Activated B cell treated with CpG ODN at 0.5 μM for 24 hours (primary cell): ENCODE measurements at regions of chr2 and their contacts with region 1.

Region 1: DNA sequence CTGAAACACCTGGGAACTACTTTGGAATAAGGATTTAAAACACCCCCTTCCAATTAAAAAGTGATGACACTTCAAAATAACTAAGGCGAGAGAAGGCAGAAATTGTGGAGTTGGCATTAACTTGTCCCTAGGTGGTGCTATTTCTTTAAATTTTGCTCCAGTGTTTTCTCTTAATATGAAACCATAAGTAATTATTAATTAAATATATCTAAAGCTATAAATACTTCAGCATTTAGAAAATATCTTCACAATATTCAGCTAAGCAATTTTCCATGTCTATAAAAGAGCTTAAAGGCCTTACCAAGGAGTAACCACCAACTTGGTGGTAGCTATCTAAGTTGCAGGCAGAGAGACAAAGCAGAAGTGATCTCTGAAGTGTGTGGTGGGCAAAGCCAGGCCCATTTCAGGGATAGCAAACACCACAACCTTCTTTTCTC is 186.8 kb upstream of the PGAP1 start:
- DNase-seq: no peak
- ATAC-seq: peak; percentile 68
- H3K4me3 Mint-ChIP-seq: no peak overlapping the region
- H3K27ac Mint-ChIP-seq: peak overlapping the region; percentile 77
- H3K4me1 Mint-ChIP-seq: peaks cover 34% of the 10 kb centered on the region
- H3K27me3 Mint-ChIP-seq: no peaks in the 10 kb centered on the region
- CTCF ChIP-seq: no peak

Region 2: DNA sequence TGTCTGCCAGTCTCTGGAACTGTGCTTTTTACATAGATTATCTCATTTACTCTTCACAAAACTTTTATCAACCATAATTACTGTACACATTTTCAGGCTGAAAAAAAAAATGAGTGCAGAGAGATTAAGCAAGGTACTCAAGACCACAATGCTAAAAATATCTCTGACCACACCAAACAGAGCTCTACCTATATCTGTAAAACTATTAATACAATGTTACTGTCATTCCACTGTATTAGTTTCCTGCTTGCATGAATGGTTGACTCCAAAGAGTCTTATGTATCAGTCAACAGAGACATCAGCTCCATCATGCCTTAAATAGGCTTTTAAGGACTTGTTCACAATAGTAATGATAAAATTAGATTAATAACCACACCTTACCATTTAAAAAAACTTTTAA is 608.5 kb before region 1 on chr2:
- CTCF ChIA-PET with region 1: no interaction called
- POLR2A ChIA-PET with region 1: no interaction called
- intact Hi-C with region 1: no loop called
- DNase-seq: no peak
- ATAC-seq: no peak
- H3K4me3 Mint-ChIP-seq: no peak overlapping the region
- H3K27ac Mint-ChIP-seq: no peak overlapping the region
- H3K4me1 Mint-ChIP-seq: no peaks in the 10 kb centered on the region
- H3K27me3 Mint-ChIP-seq: peaks cover 10% of the 10 kb centered on the region
- CTCF ChIP-seq: no peak

Region 3: GRCh38 chr2:196535742-196536141 is 577.6 kb before region 1 on chr2:
- CTCF ChIA-PET with region 1: no interaction called
- POLR2A ChIA-PET with region 1: no interaction called
- intact Hi-C with region 1: no loop called
- DNase-seq: no peak
- ATAC-seq: no peak
- H3K4me3 Mint-ChIP-seq: no peak overlapping the region
- H3K27ac Mint-ChIP-seq: no peak overlapping the region
- H3K4me1 Mint-ChIP-seq: no peaks in the 10 kb centered on the region
- H3K27me3 Mint-ChIP-seq: peaks cover 5% of the 10 kb centered on the region
- CTCF ChIP-seq: no peak

Region 4: DNA sequence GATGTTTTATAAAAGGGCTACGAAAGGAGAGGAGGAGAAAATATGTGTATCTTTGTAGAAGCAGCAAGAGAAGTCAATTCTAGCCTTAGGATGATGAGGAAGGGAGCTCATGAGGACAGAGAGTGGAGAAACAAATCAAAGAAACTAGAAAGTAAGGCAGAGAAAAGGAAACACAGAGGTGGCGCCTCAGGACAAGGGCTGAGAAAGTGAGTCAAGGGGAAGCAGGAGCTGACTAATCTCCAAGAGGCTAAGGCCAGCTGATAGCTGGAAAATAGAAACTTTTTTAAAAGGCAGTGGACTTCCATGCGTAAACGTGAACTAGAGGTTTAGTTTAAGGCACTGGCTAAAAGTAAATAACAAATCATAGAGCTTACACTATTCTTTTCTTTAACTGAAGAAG is 23.9 kb after region 1 on chr2:
- CTCF ChIA-PET with region 1: interaction called, 20 read pairs
- POLR2A ChIA-PET with region 1: no interaction called
- intact Hi-C with region 1: no loop called
- DNase-seq: no peak
- ATAC-seq: no peak
- H3K4me3 Mint-ChIP-seq: peak overlapping the region; percentile 17
- H3K27ac Mint-ChIP-seq: peak overlapping the region; percentile 79
- H3K4me1 Mint-ChIP-seq: peaks cover 94% of the 10 kb centered on the region
- H3K27me3 Mint-ChIP-seq: no peaks in the 10 kb centered on the region
- CTCF ChIP-seq: no peak

Region 5: DNA sequence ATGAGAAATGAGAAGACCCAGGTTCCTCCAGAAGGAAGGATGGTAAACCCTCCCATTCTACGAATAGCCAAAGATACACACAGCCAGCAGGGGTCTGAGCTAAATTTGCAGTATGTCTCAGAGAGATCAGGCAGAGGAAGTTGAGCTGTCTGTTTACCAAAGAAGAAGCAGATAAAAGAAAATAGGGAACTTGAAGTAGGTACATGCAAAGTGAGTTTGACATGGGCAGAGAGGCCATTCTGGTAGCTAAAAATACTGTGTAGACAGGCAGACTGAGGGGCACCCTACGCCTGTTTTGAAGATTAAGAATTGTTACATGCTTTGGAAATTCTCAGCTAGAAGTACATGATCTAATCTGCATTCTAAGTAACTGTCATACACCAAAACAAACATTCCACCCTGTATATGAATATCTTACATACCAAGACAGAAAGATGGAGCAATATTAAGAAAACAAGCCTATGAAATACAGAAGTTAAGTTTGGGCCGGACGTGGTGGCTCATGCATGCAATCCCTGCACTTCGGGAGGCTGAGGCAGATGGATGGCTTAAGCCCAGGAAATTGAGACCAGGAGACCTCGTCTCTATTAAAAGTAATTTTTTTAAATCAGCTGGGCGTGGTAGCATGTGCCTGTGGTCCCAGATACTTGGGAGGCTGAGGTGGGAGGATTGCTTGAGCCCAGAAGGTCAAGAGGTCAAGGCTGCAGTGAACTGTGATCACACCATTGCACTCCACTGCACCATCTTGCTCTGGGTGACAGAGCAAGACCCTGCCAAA is 39.3 kb after region 1 on chr2:
- CTCF ChIA-PET with region 1: interaction called, 28 read pairs
- POLR2A ChIA-PET with region 1: interaction called, 8 read pairs
- intact Hi-C with region 1: loop called (anchors 1 kb)
- DNase-seq: no peak
- ATAC-seq: peak; percentile 84
- H3K4me3 Mint-ChIP-seq: peak overlapping the region; percentile 79
- H3K27ac Mint-ChIP-seq: peak overlapping the region; percentile 97
- H3K4me1 Mint-ChIP-seq: peaks cover 97% of the 10 kb centered on the region
- H3K27me3 Mint-ChIP-seq: no peaks in the 10 kb centered on the region
- CTCF ChIP-seq: no peak

Region 6: DNA sequence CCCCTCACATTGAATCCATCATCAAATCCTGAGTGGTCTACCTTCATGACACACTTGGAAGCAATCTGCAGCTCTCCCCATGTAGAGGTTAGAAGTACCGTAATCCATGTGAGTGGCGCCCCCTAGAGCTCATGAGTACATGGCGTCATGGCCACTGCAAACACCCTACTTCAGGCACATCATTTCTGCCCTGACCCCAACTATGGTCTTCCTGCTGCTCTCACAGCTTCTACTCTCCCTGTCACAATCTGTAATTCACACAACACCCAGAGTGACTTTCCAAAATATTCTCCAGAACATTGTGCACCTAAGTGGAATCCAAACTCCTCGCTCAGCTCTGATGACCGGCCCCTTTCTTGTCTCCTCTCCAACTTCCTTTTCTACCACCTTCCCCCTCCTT is 55.4 kb after region 1 on chr2:
- CTCF ChIA-PET with region 1: interaction called, 282 read pairs
- POLR2A ChIA-PET with region 1: interaction called, 11 read pairs
- intact Hi-C with region 1: loop called (anchors 1 kb)
- DNase-seq: peak; percentile 47
- ATAC-seq: peak; percentile 82
- H3K4me3 Mint-ChIP-seq: no peak overlapping the region
- H3K27ac Mint-ChIP-seq: peak overlapping the region; percentile 78
- H3K4me1 Mint-ChIP-seq: peaks cover 77% of the 10 kb centered on the region
- H3K27me3 Mint-ChIP-seq: no peaks in the 10 kb centered on the region
- CTCF ChIP-seq: no peak

Region 7: GRCh38 chr2:197191177-197191939 is 78.1 kb after region 1 on chr2:
- CTCF ChIA-PET with region 1: interaction called, 69 read pairs
- POLR2A ChIA-PET with region 1: interaction called, 9 read pairs
- intact Hi-C with region 1: loop called (anchors 1 kb)
- DNase-seq: no peak
- ATAC-seq: peak; percentile 70
- H3K4me3 Mint-ChIP-seq: no peak overlapping the region
- H3K27ac Mint-ChIP-seq: peak overlapping the region; percentile 79
- H3K4me1 Mint-ChIP-seq: peaks cover 67% of the 10 kb centered on the region
- H3K27me3 Mint-ChIP-seq: no peaks in the 10 kb centered on the region
- CTCF ChIP-seq: peak; percentile 68

Region 8: GRCh38 chr2:197209742-197210408 is 96.6 kb after region 1 on chr2:
- CTCF ChIA-PET with region 1: interaction called, 12 read pairs
- POLR2A ChIA-PET with region 1: no interaction called
- intact Hi-C with region 1: no loop called
- DNase-seq: no peak
- ATAC-seq: peak; percentile 13
- H3K4me3 Mint-ChIP-seq: peak overlapping the region; percentile 66
- H3K27ac Mint-ChIP-seq: peak overlapping the region; percentile 98
- H3K4me1 Mint-ChIP-seq: peaks cover 99% of the 10 kb centered on the region
- H3K27me3 Mint-ChIP-seq: no peaks in the 10 kb centered on the region
- CTCF ChIP-seq: no peak

Region 9: DNA sequence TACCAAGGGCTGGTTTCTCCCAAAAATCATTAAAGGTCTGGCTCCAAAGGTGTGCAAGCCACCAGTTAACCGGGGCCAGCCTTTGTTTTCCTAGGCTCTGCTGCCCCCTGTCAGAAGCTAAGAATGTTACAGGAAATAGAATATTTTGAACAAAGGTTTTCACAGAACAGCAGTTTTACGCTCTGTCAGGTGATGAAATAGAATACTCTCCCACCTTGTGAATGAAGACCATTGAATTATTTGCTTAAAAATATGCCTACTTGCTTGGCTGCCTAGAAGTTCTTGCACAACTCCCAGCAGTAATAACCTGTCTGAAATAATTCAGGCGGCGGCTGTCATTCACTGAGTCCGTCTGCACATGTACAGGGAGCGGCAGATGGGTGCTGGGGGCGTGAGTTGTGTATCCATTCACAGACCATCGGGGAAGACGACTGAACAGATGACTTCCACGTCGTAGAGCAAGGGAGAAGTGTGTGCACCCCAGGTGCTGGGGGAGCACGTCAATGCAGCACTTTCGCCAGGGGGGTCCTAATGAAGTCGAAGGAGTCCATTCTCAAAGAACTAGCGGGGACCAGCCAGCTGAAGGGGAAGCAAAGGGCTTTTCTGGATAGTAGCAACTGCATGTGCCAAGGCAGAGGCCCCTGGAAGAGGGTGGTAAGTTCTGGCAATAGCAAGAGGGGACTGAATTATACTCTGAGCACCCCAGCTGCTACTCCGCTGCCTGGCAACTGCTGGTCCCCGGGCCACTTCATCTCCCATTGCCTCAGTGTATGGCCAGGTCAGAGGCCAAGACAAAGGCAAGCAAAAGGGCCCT is 265.4 kb after region 1 on chr2:
- CTCF ChIA-PET with region 1: interaction called, 12 read pairs
- POLR2A ChIA-PET with region 1: no interaction called
- intact Hi-C with region 1: loop called (anchors 1 kb)
- DNase-seq: peak; percentile 29
- ATAC-seq: peak; percentile 66
- H3K4me3 Mint-ChIP-seq: no peak overlapping the region
- H3K27ac Mint-ChIP-seq: no peak overlapping the region
- H3K4me1 Mint-ChIP-seq: peaks cover 11% of the 10 kb centered on the region
- H3K27me3 Mint-ChIP-seq: no peaks in the 10 kb centered on the region
- CTCF ChIP-seq: peak; percentile 43

Region 10: GRCh38 chr2:197992482-197993133 is 879.3 kb after region 1 on chr2:
- CTCF ChIA-PET with region 1: no interaction called
- POLR2A ChIA-PET with region 1: no interaction called
- intact Hi-C with region 1: no loop called
- DNase-seq: no peak
- ATAC-seq: no peak
- H3K4me3 Mint-ChIP-seq: no peak overlapping the region
- H3K27ac Mint-ChIP-seq: no peak overlapping the region
- H3K4me1 Mint-ChIP-seq: no peaks in the 10 kb centered on the region
- H3K27me3 Mint-ChIP-seq: no peaks in the 10 kb centered on the region
- CTCF ChIP-seq: no peak